Common myeloid progenitor, CD34-positive (primary cell): ENCODE measurements at regions of chr7 and their contacts with region 1.

Region 1: DNA sequence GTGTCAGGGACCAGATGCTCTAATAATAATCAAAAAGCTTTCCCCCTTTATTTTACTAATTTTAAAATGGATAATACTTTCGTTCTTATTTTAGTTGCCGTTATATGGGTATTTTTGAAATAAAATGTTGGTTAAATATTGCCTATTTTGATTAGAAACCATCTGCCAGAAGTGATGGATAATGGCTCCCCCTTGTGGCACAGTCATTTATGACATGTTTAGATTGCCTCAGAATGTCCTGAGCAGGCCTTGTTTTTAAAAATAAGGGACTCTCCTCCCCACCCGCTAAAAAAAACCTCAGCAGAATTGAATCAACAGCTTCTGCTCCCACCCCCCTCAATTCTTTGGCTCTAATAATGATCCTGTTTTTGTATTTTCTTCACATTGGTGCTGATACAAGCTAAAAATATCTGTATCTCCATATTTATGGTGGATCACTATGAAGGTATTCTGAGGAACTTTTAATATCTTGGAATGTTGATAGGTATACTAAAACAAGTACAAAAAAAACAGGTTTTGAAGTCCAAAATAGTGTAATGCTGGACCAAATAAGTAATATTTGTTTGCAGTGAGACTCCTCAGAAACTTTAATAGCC is 38.8 kb downstream of the TMEM60 start:
- DNase-seq: peak; percentile 81 to 92 (median 85)
- H3K4me3 ChIP-seq: no peak overlapping the region
- H3K27ac ChIP-seq: peak overlapping the region in 1 of 2 experiments; percentile 59
- H3K4me1 ChIP-seq: peaks cover 14 to 37% (median 25%) of the 10 kb centered on the region in 4 experiments
- H3K27me3 ChIP-seq: no peaks in the 10 kb centered on the region

Region 2: GRCh38 chr7:77651573-77652162 is 107.7 kb before region 1 on chr7:
- CTCF ChIA-PET with region 1: interaction called, 78 read pairs
- POLR2A ChIA-PET with region 1: no interaction called
- DNase-seq: peak; percentile 40 to 72 (median 61)
- H3K4me3 ChIP-seq: no peak overlapping the region
- H3K27ac ChIP-seq: no peak overlapping the region
- H3K4me1 ChIP-seq: no peaks in the 10 kb centered on the region
- H3K27me3 ChIP-seq: no peaks in the 10 kb centered on the region

Region 3: DNA sequence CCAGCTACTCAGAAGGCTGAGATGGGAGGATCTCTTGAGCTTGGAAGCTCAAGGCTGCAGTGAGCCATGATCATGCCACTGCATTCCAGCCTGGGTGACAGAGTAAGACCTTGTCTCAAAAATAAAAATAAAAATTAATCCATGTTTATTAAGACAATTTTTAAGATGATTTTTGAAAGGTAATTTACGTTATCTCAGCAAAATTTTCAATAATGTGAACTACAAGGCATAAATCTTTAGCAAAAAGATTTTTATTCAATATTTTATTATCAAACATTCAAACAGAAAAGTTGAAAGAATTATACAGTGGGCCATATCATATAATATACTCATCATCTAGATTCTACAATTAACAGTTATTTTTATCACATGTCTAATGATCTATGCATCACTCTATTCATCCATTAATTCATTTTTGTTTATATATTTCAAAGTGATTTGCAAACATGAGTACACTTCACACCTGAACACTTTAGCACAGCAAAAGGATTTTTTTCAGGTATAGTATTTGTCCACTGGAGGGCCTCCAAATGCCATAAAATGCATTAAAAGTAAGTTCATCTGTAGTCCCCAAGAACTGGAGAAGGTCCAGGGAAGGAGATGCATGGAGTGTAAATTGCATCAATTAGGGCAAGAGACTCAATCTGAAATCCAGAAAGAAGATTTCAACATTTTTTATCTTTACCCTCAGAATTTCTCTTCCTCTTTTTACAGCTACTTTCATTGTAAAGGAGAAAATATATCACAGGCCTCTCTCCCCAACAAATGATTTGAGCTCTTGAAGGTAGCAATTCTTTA is 101.8 kb before region 1 on chr7:
- CTCF ChIA-PET with region 1: interaction called, 78 read pairs
- POLR2A ChIA-PET with region 1: no interaction called
- DNase-seq: peak; percentile 64 to 75 (median 70)
- H3K4me3 ChIP-seq: no peak overlapping the region
- H3K27ac ChIP-seq: no peak overlapping the region
- H3K4me1 ChIP-seq: no peaks in the 10 kb centered on the region
- H3K27me3 ChIP-seq: no peaks in the 10 kb centered on the region

Region 4: DNA sequence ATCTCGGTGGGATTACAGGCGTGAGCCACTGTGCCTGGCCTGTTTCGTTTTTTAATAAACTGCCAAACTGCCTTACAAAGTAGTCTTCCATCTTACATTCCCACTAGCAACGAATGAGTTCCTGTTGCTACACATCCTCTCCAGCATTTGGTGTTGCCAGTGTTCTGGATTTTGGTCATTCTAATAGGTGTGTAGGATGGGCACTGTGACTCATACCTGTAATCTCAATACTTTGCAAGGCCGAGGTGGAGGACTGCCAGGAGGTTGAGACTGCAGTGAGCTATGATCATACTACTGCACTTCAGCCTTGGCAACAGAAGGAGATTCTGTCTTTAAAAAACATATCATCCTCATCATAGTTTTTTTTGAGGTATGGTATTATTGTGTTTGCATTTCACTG is 84.5 kb before region 1 on chr7:
- CTCF ChIA-PET with region 1: interaction called, 11 read pairs
- POLR2A ChIA-PET with region 1: no interaction called
- DNase-seq: no peak
- H3K4me3 ChIP-seq: no peak overlapping the region
- H3K27ac ChIP-seq: no peak overlapping the region
- H3K4me1 ChIP-seq: no peaks in the 10 kb centered on the region
- H3K27me3 ChIP-seq: no peaks in the 10 kb centered on the region

Region 5: GRCh38 chr7:77696198-77697028 is 63.0 kb before region 1 on chr7 and contains the start of gene RSBN1L:
- CTCF ChIA-PET with region 1: interaction called, 28 read pairs
- POLR2A ChIA-PET with region 1: interaction called, 5 read pairs
- DNase-seq: peak; percentile 98 to 99 (median 99)
- H3K4me3 ChIP-seq: peak within 1 kb of the TSS; percentile 97 to 100 (median 99)
- H3K27ac ChIP-seq: peak within 1 kb of the TSS; percentile 87 to 96
- H3K4me1 ChIP-seq: peaks cover 15 to 42% (median 26%) of the 10 kb centered on the region in 4 experiments
- H3K27me3 ChIP-seq: no peaks in the 10 kb centered on the region

Region 6: GRCh38 chr7:77727936-77728701 is 31.3 kb before region 1 on chr7:
- CTCF ChIA-PET with region 1: interaction called, 12 read pairs
- POLR2A ChIA-PET with region 1: no interaction called
- DNase-seq: peak; percentile 76 to 95 (median 87)
- H3K4me3 ChIP-seq: peak overlapping the region in 5 of 7 experiments; percentile 15 to 51 (median 28)
- H3K27ac ChIP-seq: peak overlapping the region; percentile 90 to 94
- H3K4me1 ChIP-seq: peaks cover 15 to 36% (median 16%) of the 10 kb centered on the region in 4 experiments
- H3K27me3 ChIP-seq: no peaks in the 10 kb centered on the region

Region 7: DNA sequence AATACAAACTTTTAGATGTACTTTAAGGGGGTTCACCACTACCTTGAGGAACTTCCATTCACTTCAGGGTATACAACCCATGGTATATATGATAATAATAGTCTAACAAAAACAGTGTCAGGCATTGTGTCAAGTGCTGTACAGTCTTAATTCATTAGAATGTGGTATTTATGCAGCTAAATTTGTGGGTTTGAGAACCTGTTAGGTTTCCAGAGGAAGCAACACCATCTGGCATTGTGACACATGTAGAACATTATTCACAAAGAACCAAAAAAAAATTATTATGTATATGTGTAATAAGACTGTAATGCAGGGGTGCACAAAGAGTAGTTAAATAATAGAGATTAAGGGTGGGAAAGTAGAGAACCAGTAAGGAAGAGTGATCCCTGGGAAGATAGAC is 12.5 kb after region 1 on chr7:
- CTCF ChIA-PET with region 1: interaction called, 10 read pairs
- POLR2A ChIA-PET with region 1: no interaction called
- DNase-seq: peak in 2 of 3 donors; percentile 49 to 68
- H3K4me3 ChIP-seq: no peak overlapping the region
- H3K27ac ChIP-seq: no peak overlapping the region
- H3K4me1 ChIP-seq: peaks cover 0 to 6% (median 0%) of the 10 kb centered on the region in 4 experiments
- H3K27me3 ChIP-seq: no peaks in the 10 kb centered on the region

Region 8: GRCh38 chr7:77782383-77782782 is 23.0 kb after region 1 on chr7:
- CTCF ChIA-PET with region 1: no interaction called
- POLR2A ChIA-PET with region 1: no interaction called
- DNase-seq: no peak
- H3K4me3 ChIP-seq: no peak overlapping the region
- H3K27ac ChIP-seq: no peak overlapping the region
- H3K4me1 ChIP-seq: peaks cover 0 to 2% (median 0%) of the 10 kb centered on the region in 4 experiments
- H3K27me3 ChIP-seq: no peaks in the 10 kb centered on the region